Sciatic nerve (tissue), 2 donors: ENCODE measurements at regions of chr18 and their contacts with region 1.

Region 1: DNA sequence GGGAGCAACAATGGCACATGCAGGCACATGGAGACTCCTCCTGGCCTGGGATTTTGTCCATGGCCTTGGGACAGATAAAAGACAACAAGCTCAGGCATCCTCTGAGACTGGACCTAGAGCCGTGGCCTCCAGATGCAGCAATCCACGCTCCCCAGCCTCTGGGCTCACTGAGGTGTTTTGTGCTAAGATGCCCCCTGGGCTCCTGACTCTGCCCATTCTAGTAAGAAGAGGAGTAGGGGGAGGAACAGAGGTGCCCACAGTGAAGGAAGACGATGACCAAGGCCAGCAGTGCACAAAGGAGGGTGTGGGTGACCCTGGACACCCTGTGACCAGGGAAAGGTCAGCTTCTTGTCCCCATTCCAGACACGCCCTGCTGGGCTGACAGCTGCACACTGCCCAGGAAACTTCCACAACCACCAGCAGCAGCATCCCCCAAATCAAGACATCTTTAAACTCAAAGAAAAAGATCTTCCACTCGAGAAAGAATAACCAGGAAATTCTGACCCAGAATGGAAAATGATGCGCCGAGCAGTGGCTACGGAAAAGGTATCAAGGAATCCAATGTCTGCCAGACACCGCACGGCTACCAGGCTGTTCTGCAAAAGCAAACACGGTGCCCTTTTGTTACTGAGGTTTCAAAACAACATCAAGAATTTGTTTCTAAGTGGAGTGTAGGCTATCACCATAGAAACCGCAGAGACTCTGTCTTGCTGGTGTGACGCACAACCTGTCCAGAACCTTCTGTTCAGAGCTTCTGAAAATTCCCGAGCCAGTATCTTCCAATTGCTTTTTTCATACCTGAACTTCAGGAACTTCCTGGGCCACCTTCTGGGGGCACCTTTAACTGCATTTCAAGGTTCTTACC is 65.5 kb downstream of the ZNF516 start:
- DNase-seq: no peak
- ATAC-seq: peak; percentile 41

Region 2: GRCh38 chr18:75247611-75248421 is 1181.7 kb before region 1 on chr18:
- intact Hi-C with region 1: no loop called
- DNase-seq: no peak
- ATAC-seq: peak; percentile 62

Region 3: DNA sequence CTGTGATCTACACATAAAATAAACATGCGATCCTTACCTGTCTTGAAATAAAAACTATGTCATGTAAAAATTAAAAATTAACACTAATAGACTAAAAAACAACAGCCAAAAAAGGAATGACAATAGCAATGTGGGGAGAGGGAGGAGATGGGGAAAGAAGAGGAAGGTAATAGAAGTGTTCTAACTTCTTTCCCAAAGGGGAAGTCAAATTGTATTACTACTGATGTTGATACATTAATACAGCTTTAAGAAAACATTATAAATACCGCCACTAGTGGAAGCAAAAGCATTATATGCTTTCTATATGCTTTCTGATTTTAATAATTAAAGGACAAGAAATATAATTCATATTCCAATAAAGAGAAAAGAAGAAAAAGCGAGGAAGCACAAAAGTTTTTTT is 43.3 kb after region 1 on chr18:
- intact Hi-C with region 1: loop called (anchors 2 kb)
- DNase-seq: no peak
- ATAC-seq: no peak